PC-9 (cell line): ENCODE measurements at regions of chr7 and their contacts with region 1.

Region 1: GRCh38 chr7:87127019-87127418 is 25.2 kb upstream of the DMTF1 start:
- DNase-seq: no peak
- H3K4me3 ChIP-seq: no peak overlapping the region
- H3K27ac ChIP-seq: no peak overlapping the region
- H3K4me1 ChIP-seq: no peaks in the 10 kb centered on the region
- H3K27me3 ChIP-seq: no peaks in the 10 kb centered on the region
- CTCF ChIP-seq: no peak

Region 2: GRCh38 chr7:86932038-86932512 is 194.9 kb before region 1 on chr7:
- CTCF ChIA-PET with region 1: no interaction called
- POLR2A ChIA-PET with region 1: interaction called, 10 read pairs
- intact Hi-C with region 1: no loop called
- DNase-seq: no peak
- H3K4me3 ChIP-seq: no peak overlapping the region
- H3K27ac ChIP-seq: no peak overlapping the region
- H3K4me1 ChIP-seq: no peaks in the 10 kb centered on the region
- H3K27me3 ChIP-seq: no peaks in the 10 kb centered on the region
- CTCF ChIP-seq: no peak